Activated CD8-positive, alpha-beta memory T cell treated with anti-CD3 and anti-CD28 coated beads, Interleukin-2, amount 10 ng/mL, durations not matched to agents 7 days and 5 days (primary cell): ENCODE measurements at regions of chr16 and their contacts with region 1.

Region 1: GRCh38 chr16:1997494-1998353 is 8.0 kb downstream of the SYNGR3 start:
- DNase-seq: no peak
- ATAC-seq: no peak
- H3K4me3 Mint-ChIP-seq: no peak overlapping the region
- H3K27ac Mint-ChIP-seq: no peak overlapping the region
- H3K4me1 Mint-ChIP-seq: peaks cover 15% of the 10 kb centered on the region
- H3K27me3 Mint-ChIP-seq: no peaks in the 10 kb centered on the region

Region 2: GRCh38 chr16:1899641-1900451 is 97.9 kb before region 1 on chr16:
- CTCF ChIA-PET with region 1: no interaction called
- DNase-seq: no peak
- ATAC-seq: no peak
- H3K4me3 Mint-ChIP-seq: no peak overlapping the region
- H3K27ac Mint-ChIP-seq: no peak overlapping the region
- H3K4me1 Mint-ChIP-seq: no peaks in the 10 kb centered on the region
- H3K27me3 Mint-ChIP-seq: peaks cover 12% of the 10 kb centered on the region

Region 3: DNA sequence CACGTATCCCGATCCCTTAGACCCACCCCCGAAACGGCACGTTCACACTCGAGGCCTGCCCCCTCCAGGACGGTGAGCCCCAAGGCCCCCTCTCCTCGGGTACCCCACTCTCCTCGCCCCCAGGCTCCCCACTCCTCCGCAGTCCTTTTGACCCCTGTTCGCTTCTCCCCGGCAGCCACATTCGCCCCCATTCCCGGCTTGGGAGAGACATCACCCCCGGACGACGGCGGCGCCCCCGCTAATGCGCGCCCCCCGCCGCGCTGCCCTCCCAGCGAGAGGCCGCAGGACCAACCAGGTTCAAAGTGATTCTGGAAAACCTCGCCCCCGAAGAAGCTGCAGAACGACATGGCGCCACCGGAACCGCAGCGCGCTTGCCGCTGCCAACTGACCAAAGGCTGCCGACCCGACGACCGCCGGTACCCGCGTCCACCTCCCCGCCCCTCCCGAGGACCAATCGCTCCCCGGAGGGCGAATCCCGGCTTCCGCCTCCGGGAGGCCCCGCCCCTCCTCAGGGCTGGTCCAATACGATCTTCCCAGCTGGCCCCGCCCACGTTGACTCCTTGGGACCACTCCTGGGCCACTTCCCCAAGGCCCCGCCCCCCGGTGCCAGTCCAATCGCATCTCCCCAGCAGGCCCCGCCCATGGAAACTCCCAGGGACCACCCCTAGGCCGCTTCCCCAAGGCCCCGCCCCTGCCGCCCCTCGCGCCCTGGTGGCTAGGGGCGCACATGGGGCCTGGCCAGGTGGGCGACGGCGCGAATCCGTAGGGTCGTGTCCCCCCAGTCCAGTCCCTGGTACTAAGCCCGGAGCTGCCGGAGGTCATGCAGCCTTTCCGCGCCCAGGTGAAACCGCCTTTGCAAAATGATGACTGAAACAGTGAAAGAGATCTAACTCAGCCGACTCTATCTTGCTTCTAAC is 54.7 kb before region 1 on chr16 and contains the start of gene MSRB1:
- CTCF ChIA-PET with region 1: no interaction called
- DNase-seq: peak; percentile 100
- ATAC-seq: peak; percentile 96
- H3K4me3 Mint-ChIP-seq: peak within 1 kb of the TSS; percentile 82
- H3K27ac Mint-ChIP-seq: peak within 1 kb of the TSS; percentile 78
- H3K4me1 Mint-ChIP-seq: peaks cover 26% of the 10 kb centered on the region
- H3K27me3 Mint-ChIP-seq: no peaks in the 10 kb centered on the region
- total RNA-seq, gene MSRB1: 14.5 to 19.8 TPM

Region 4: GRCh38 chr16:2009789-2010510 is 12.2 kb after region 1 on chr16 and contains the start of gene ZNF598:
- CTCF ChIA-PET with region 1: interaction called, 42 read pairs
- DNase-seq: peak; percentile 84
- ATAC-seq: peak; percentile 96
- H3K4me3 Mint-ChIP-seq: peak within 1 kb of the TSS; percentile 85
- H3K27ac Mint-ChIP-seq: peak within 1 kb of the TSS; percentile 91
- H3K4me1 Mint-ChIP-seq: peaks cover 36% of the 10 kb centered on the region
- H3K27me3 Mint-ChIP-seq: no peaks in the 10 kb centered on the region
- total RNA-seq, gene ZNF598: 76.2 to 94.5 TPM